PC-9 (cell line): ENCODE measurements at regions of chr1 and their contacts with region 1.

Region 1: GRCh38 chr1:8560611-8561544 is 243.0 kb downstream of the SLC45A1 start:
- DNase-seq: peak; percentile 5 to 43
- H3K4me3 ChIP-seq: no peak overlapping the region
- H3K27ac ChIP-seq: no peak overlapping the region
- H3K4me1 ChIP-seq: peaks cover 13% of the 10 kb centered on the region
- H3K27me3 ChIP-seq: no peaks in the 10 kb centered on the region
- CTCF ChIP-seq: peak; percentile 86

Region 2: DNA sequence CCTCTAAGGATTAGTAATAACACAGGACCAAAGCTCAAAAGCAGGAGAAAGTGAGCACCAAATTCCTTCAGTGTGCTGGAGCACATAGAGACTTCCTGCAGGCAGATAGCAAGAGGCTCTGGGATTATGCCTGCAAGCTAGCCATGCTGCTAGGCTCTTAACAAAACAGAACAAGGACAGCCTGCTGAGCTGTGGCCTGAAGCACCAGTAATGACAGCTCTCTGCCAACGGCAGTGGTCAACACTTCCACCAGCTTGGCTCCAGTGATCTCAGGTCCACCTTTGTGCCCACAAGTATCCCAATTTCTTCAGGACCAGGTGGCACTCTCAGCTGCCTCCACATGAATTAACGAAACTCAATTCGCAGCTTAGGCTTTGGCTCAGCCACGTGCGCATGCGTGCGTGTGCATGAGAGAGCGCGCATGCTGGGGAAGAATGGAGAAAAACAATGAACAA is 178.8 kb before region 1 on chr1:
- CTCF ChIA-PET with region 1: no interaction called
- POLR2A ChIA-PET with region 1: no interaction called
- intact Hi-C with region 1: no loop called
- DNase-seq: no peak
- H3K4me3 ChIP-seq: no peak overlapping the region
- H3K27ac ChIP-seq: no peak overlapping the region
- H3K4me1 ChIP-seq: no peaks in the 10 kb centered on the region
- H3K27me3 ChIP-seq: no peaks in the 10 kb centered on the region
- CTCF ChIP-seq: no peak

Region 3: DNA sequence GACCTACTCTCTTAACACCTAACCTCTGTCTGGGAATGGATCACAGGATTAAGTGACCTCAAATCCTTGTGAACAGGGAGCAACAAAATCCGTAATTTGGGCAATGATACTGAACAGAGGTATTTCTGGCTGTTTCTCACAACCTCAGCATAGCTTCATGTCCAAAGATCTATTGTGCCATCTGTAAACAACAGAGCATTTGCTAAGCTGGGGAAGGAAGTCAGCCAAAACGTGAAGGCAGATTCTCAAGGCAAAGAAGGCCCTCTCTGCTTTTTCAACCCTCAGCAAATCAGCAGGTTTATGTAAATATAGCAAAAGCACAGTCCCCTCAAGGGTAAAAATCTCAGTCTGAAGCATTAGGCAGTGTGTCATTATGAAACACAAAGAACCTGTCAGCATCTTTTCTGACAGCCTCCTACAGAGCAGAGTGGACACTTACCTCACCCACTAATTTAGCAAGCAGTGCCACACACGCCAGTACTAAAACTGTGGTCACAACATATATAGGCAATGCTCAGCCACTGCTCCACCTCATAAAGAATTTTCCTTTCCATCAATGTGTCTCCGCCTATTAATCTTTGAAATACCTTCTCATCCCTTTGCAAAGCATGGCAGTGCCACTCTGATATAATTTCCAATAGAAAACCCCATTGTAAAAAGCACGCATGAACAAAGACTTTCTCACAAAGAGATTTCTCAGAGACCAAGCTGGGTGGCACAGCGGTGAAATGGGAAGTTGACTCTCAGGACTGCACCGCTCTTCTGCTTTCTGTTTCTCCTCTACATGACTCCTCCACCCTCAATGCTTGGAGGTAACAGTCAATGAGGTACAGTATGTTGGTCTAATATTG is 68.6 kb after region 1 on chr1:
- CTCF ChIA-PET with region 1: no interaction called
- POLR2A ChIA-PET with region 1: interaction called, 17 read pairs
- intact Hi-C with region 1: no loop called
- DNase-seq: no peak
- H3K4me3 ChIP-seq: no peak overlapping the region
- H3K27ac ChIP-seq: no peak overlapping the region
- H3K4me1 ChIP-seq: peaks cover 24% of the 10 kb centered on the region
- H3K27me3 ChIP-seq: no peaks in the 10 kb centered on the region
- CTCF ChIP-seq: no peak